ENCODE measurements at regions of chr17 and their contacts with region 1.

Region 1: GRCh38 chr17:13171790-13172189 is 154.0 kb upstream of the ELAC2 start:
- DNase-seq: no peak
- ATAC-seq: no peak
- H3K4me3 ChIP-seq: no peak overlapping the region
- H3K4me3 Mint-ChIP-seq: no peak overlapping the region
- H3K27ac ChIP-seq: no peak overlapping the region
- H3K27ac Mint-ChIP-seq: no peak overlapping the region
- H3K4me1 ChIP-seq: no peaks in the 10 kb centered on the region
- H3K4me1 Mint-ChIP-seq: no peaks in the 10 kb centered on the region
- H3K27me3 ChIP-seq: no peaks in the 10 kb centered on the region
- H3K27me3 Mint-ChIP-seq: no peaks in the 10 kb centered on the region
- CTCF ChIP-seq: no peak

Region 2: GRCh38 chr17:13158494-13159240 is 13.1 kb before region 1 on chr17:
- intact Hi-C with region 1: loop called (anchors 2 kb)
- DNase-seq: no peak
- ATAC-seq: no peak
- H3K4me3 ChIP-seq: no peak overlapping the region
- H3K4me3 Mint-ChIP-seq: no peak overlapping the region
- H3K27ac ChIP-seq: no peak overlapping the region
- H3K27ac Mint-ChIP-seq: no peak overlapping the region
- H3K4me1 ChIP-seq: no peaks in the 10 kb centered on the region
- H3K4me1 Mint-ChIP-seq: no peaks in the 10 kb centered on the region
- H3K27me3 ChIP-seq: no peaks in the 10 kb centered on the region
- H3K27me3 Mint-ChIP-seq: no peaks in the 10 kb centered on the region
- CTCF ChIP-seq: no peak